H1 (cell line): ENCODE measurements at regions of chr22 and their contacts with region 1.

Region 1: GRCh38 chr22:31846161-31847115 is 92.6 kb downstream of the DEPDC5 start:
- DNase-seq: no peak
- H3K4me3 ChIP-seq: no peak overlapping the region
- H3K27ac ChIP-seq: no peak overlapping the region
- H3K4me1 ChIP-seq: no peaks in the 10 kb centered on the region
- H3K27me3 ChIP-seq: no peaks in the 10 kb centered on the region
- CTCF ChIP-seq: peak in 2 of 3 experiments; percentile 36 to 58; a peak in 3 of 4 replicates
- EP300 ChIP-seq: no peak
- POLR2A ChIP-seq: no peak
- RAD21 ChIP-seq: peak in 1 of 2 experiments; percentile 17; a peak in 1 of 4 replicates

Region 2: GRCh38 chr22:31692186-31692886 is 154.1 kb before region 1 on chr22:
- CTCF ChIA-PET with region 1: no interaction called
- POLR2A ChIA-PET with region 1: no interaction called
- DNase-seq: no peak
- H3K4me3 ChIP-seq: no peak overlapping the region
- H3K27ac ChIP-seq: no peak overlapping the region
- H3K4me1 ChIP-seq: no peaks in the 10 kb centered on the region
- H3K27me3 ChIP-seq: no peaks in the 10 kb centered on the region
- CTCF ChIP-seq: no peak
- EP300 ChIP-seq: no peak
- POLR2A ChIP-seq: no peak; a peak in 1 of 3 replicates
- RAD21 ChIP-seq: no peak

Region 3: GRCh38 chr22:31836010-31836409 is 10.4 kb before region 1 on chr22:
- CTCF ChIA-PET with region 1: interaction called, 13 read pairs
- POLR2A ChIA-PET with region 1: interaction called, 3 read pairs
- DNase-seq: no peak
- H3K4me3 ChIP-seq: no peak overlapping the region
- H3K27ac ChIP-seq: no peak overlapping the region
- H3K4me1 ChIP-seq: no peaks in the 10 kb centered on the region
- H3K27me3 ChIP-seq: no peaks in the 10 kb centered on the region
- CTCF ChIP-seq: peak; percentile 15 to 29 (median 23); a peak in 3 of 4 replicates
- EP300 ChIP-seq: no peak
- POLR2A ChIP-seq: no peak
- RAD21 ChIP-seq: peak; percentile 20 to 47; a peak in 2 of 4 replicates

Region 4: DNA sequence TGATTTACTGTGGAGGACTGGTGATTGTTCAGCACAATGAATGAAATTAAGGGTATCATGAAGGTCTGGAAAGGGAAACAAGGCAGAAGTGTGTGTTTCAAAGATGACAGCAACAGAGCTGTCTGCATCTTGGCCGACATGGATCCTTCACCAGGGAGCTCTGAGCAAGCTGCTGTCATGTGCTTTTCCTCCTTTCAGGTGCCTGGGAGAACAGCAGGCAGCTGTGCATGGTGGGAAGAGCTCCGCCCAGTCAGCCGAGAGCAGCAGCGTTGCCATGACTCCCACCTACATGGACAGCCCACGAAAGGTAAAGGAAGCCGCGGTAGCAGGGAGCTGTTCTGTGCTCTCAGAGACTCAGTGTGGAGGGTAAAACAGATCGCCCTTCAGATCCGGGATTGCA is 10.8 kb after region 1 on chr22:
- CTCF ChIA-PET with region 1: interaction called, 20 read pairs
- POLR2A ChIA-PET with region 1: interaction called, 3 read pairs
- DNase-seq: peak; percentile 57 to 76
- H3K4me3 ChIP-seq: no peak overlapping the region
- H3K27ac ChIP-seq: no peak overlapping the region
- H3K4me1 ChIP-seq: peaks cover 0 to 2% (median under 1%) of the 10 kb centered on the region in 4 experiments; a peak in 2 of 7 replicates
- H3K27me3 ChIP-seq: no peaks in the 10 kb centered on the region; a peak in 1 of 7 replicates
- CTCF ChIP-seq: no peak
- EP300 ChIP-seq: no peak
- POLR2A ChIP-seq: peak; percentile 24 to 30; a peak in 2 of 3 replicates
- RAD21 ChIP-seq: no peak